Pancreas (tissue), 10 donors: ENCODE measurements at regions of chr19 and their contacts with region 1.

Region 1: GRCh38 chr19:48069435-48069834 is 25.6 kb upstream of the CABP5 start:
- DNase-seq: no peak
- ATAC-seq: no peak
- H3K4me3 ChIP-seq: no peak overlapping the region
- H3K27ac ChIP-seq: no peak overlapping the region
- H3K4me1 ChIP-seq: no peaks in the 10 kb centered on the region
- H3K27me3 ChIP-seq: no peaks in the 10 kb centered on the region
- CTCF ChIP-seq: no peak

Region 2: GRCh38 chr19:48053856-48054255 is 15.6 kb before region 1 on chr19:
- intact Hi-C with region 1: loop called in 1 of 3 experiments (anchors 2 kb)
- DNase-seq: no peak
- ATAC-seq: no peak
- H3K4me3 ChIP-seq: no peak overlapping the region
- H3K27ac ChIP-seq: no peak overlapping the region
- H3K4me1 ChIP-seq: no peaks in the 10 kb centered on the region
- H3K27me3 ChIP-seq: no peaks in the 10 kb centered on the region
- CTCF ChIP-seq: no peak